HepG2 (cell line): ENCODE measurements at regions of chr16 and their contacts with region 1.

Region 1: DNA sequence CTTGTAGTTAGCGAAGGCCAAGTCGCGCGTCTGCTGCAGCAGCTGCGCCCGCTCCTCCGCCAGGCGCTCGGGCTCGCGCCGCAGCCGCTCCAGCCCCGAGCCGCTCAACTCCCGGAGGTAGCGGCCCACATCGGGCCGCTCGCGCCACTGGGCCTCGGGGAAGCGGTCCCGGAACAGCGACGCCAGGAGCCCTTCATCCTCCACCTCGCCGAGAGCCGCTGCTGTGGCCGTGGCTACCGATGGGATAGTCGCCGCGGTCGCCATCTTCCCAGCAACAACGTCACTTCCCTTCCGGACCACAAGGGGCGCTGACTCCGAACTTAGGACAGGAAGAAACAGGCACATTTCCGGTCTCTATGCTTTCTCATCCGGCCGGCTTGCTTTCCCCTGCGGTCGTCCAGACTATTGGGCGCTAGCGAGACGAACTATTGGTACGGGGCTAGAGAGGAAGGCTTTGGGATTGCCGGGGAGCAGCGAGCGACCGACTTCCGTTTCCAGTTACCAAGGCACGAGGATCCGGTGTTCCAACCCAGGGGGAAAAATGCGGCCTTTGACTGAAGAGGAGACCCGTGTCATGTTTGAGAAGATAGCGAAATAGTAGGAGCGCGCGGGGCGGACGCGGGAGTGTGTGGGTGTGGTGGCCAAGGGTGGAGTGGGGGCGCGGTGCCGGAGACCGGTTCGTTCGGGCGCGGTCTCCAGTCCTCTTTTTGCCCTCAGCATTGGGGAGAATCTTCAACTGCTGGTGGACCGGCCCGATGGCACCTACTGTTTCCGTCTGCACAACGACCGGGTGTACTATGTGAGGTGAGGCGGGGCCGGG is at the starts of genes COG8 and NIP7:
- DNase-seq: peak; percentile 99
- ATAC-seq: peak; percentile 98
- H3K4me3 ChIP-seq: peak within 1 kb of the TSS; percentile 79 to 94 (median 86)
- H3K27ac ChIP-seq: peak within 1 kb of the TSS; percentile 86
- H3K4me1 ChIP-seq: peaks cover 39% of the 10 kb centered on the region
- H3K27me3 ChIP-seq: no peaks in the 10 kb centered on the region; a peak in 1 of 5 replicates
- CTCF ChIP-seq: peak; percentile 96
- EP300 ChIP-seq: peak; percentile 22 to 55; a peak in 3 of 4 replicates
- POLR2A ChIP-seq: peak; percentile 91 to 93
- RAD21 ChIP-seq: peak; percentile 71
- total RNA-seq, gene COG8: 52.1 and 55.3 TPM in 2 replicates
- total RNA-seq, gene NIP7: 114 and 144 TPM in 2 replicates

Region 2: DNA sequence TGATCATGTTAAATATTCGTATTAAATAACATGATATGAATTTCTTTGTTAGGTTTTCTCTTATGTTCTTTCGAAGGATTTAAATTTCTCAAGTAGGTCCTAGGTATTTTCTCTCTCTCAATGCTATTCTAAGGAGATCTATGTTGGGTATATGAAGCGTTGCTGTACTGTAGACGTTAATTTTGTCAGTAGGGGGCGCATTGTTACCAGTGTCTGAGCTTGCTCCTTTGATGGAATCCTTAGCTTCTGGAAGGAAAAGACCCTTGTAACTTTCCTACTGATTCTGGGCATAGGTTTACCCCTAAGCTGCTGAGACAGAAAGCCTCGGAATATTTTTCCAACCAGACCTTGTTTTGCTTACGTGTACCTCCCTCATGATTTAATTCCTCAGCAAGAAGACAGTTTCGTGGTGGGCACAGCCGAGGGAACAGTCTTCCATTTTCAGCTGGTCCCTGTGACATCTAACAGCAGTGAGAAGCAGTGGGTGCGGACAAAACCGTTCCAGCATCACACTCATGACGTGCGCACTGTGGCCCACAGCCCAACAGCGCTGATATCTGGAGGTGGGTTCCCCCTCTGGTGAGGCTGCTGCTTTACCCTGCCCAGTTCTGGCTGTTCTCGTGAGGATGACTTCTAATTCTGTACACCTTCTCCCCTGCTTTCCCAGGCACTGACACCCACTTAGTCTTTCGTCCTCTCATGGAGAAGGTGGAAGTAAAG is 189.2 kb before region 1 on chr16:
- CTCF ChIA-PET with region 1: no interaction called
- POLR2A ChIA-PET with region 1: no interaction called
- in situ Hi-C with region 1: no loop called
- intact Hi-C with region 1: loop called (anchors 1 kb)
- DNase-seq: peak; percentile 68
- ATAC-seq: peak; percentile 91
- H3K4me3 ChIP-seq: no peak overlapping the region
- H3K27ac ChIP-seq: no peak overlapping the region
- H3K4me1 ChIP-seq: no peaks in the 10 kb centered on the region
- H3K27me3 ChIP-seq: no peaks in the 10 kb centered on the region
- CTCF ChIP-seq: peak; percentile 84
- EP300 ChIP-seq: no peak
- POLR2A ChIP-seq: no peak
- RAD21 ChIP-seq: peak; percentile 72; the same call in 1 of the 2 replicates

Region 3: DNA sequence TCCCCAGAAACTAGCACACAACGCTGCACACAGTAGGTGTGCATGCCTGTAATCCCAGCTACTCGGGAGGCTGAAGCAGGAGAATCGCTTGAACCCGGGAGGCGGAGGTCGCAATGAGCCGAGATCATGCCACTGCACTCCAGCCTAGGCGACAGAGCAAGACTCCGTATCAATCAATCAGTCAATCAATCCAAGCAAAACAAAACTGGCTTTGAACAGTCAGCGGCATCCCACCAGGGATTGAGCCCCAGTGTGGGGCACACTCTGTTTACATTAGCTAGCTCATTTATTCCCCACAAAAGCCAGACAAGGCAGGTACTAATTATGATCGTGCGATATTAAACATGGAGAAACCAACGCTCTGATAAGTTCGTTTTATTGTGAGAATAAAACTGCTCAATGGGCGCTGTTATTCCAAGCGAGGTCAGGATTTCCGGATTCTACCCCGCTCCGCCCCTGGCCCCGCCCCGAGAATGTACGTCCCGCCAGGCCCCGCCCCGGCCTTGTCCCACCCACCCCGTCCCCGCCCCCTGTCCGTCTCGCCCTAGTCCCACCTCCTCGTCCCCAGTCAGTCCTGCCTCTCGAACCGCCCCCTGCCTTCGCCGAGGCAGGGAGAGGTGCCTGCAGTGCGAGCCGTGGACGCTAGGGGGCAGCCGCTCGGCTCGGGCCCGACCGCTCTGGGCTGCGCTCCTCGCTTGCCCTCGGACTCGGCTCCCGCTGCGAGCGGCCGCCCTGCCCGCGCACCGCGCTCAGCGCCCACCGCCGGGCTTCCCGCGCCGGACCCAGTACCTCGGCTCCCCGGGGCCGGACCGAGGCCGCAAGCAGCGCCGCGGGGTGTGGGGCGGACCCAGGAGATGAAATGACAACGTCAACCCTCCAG is 28.6 kb before region 1 on chr16 and contains the start of gene VPS4A:
- CTCF ChIA-PET with region 1: interaction called, 10 read pairs
- POLR2A ChIA-PET with region 1: interaction called, 3 read pairs
- in situ Hi-C with region 1: no loop called
- intact Hi-C with region 1: no loop called
- DNase-seq: peak; percentile 92
- ATAC-seq: peak; percentile 91
- H3K4me3 ChIP-seq: peak within 1 kb of the TSS; percentile 74 to 96 (median 81)
- H3K27ac ChIP-seq: peak within 1 kb of the TSS; percentile 75
- H3K4me1 ChIP-seq: peaks cover 34% of the 10 kb centered on the region
- H3K27me3 ChIP-seq: no peaks in the 10 kb centered on the region
- CTCF ChIP-seq: peak; percentile 92
- EP300 ChIP-seq: peak; percentile 14 to 54; a peak in 2 of 4 replicates
- POLR2A ChIP-seq: peak; percentile 81 to 82
- RAD21 ChIP-seq: peak; percentile 91
- total RNA-seq, gene VPS4A: 21.0 and 27.9 TPM in 2 replicates

Region 4: DNA sequence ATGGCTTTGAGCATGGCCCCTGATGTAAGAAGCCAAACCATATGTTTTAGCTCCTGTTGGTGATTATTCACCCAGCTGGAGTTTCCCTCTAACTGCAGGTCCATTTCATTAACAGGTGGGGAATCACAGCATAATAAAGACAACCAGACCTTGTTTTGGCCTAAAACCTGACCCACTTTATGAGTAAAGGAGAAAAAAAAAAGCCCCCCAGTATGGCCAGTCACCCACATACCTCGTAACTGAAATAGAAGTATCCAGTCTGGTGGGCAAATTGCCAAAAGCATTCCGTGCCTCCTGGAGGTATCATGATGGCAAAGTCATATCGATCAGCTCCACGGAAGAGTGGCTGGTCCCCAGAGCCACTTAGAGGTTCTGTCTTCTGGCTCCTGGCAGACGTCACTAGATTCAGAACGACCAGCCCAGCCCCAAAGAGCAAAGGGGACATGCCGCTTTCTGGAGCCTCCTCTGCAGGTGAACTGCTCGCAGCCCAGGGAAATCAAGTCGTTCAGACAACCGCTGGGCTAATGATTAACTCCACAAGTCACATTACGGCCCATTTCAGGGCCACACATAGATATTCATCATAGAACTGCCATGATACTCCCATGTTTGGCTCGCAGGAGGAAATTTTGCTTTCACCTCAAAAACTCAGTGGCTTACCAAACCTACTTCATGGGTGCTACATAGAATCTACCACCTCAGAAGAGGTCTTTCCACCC is 12.0 kb after region 1 on chr16 and contains the start of gene TMED6:
- CTCF ChIA-PET with region 1: no interaction called
- POLR2A ChIA-PET with region 1: interaction called, 22 read pairs
- in situ Hi-C with region 1: no loop called
- intact Hi-C with region 1: no loop called
- DNase-seq: peak; percentile 92
- ATAC-seq: peak; percentile 93
- H3K4me3 ChIP-seq: peak within 1 kb of the TSS; percentile 54 to 64 (median 61)
- H3K27ac ChIP-seq: peak within 1 kb of the TSS; percentile 39
- H3K4me1 ChIP-seq: peaks cover 24% of the 10 kb centered on the region
- H3K27me3 ChIP-seq: no peaks in the 10 kb centered on the region
- CTCF ChIP-seq: peak; percentile 22
- EP300 ChIP-seq: no peak
- POLR2A ChIP-seq: peak; percentile 33 to 72; a peak in 2 of 4 replicates
- RAD21 ChIP-seq: no peak
- total RNA-seq, gene TMED6: 6.4 and 14.4 TPM in 2 replicates